ENCODE measurements at regions of chr7 and their contacts with region 1.

Region 1: DNA sequence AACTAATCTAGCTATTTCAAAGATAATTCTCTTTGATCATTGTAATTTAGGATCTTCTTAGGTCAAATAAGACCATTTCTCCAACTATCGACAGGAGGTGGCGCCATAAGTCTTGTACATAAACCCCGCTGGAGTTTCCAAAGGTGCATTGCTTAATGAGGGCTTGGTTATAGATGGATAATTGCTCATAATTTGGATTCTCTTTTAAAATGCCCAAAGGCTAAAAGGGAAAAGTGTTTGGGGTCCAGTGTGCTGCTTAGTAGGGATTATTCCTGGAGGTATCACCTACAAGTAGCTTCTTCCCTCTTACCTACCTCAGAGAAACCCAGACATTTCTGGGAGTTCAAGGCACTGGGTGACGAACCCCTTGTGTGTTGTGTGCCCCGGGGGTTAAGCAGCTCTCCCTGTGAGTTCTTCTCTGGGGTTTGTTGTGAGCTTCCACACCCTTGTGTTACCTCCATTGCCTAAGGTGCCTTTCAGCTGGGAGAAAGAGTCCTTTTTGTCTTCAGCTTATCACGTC is 75.2 kb downstream of the PAXIP1 start:
- DNase-seq: peak; percentile 88
- ATAC-seq: peak; percentile 54
- H3K4me3 ChIP-seq: peak overlapping the region; percentile 64 to 98 (median 83)
- H3K4me3 Mint-ChIP-seq: peak overlapping the region; percentile 97
- H3K27ac ChIP-seq: peak overlapping the region; percentile 83 to 94
- H3K27ac Mint-ChIP-seq: peak overlapping the region; percentile 96
- H3K4me1 ChIP-seq: peaks cover 12 to 14% of the 10 kb centered on the region in 2 donors
- H3K4me1 Mint-ChIP-seq: peaks cover 31% of the 10 kb centered on the region
- H3K27me3 ChIP-seq: no peaks in the 10 kb centered on the region
- H3K27me3 Mint-ChIP-seq: no peaks in the 10 kb centered on the region
- CTCF ChIP-seq: peak; percentile 83

Region 2: GRCh38 chr7:154628556-154628955 is 299.1 kb before region 1 on chr7:
- CTCF ChIA-PET with region 1: no interaction called
- POLR2A ChIA-PET with region 1: no interaction called
- intact Hi-C with region 1: no loop called
- DNase-seq: no peak
- ATAC-seq: no peak
- H3K4me3 ChIP-seq: no peak overlapping the region
- H3K4me3 Mint-ChIP-seq: no peak overlapping the region
- H3K27ac ChIP-seq: no peak overlapping the region
- H3K27ac Mint-ChIP-seq: no peak overlapping the region
- H3K4me1 ChIP-seq: no peaks in the 10 kb centered on the region
- H3K4me1 Mint-ChIP-seq: no peaks in the 10 kb centered on the region
- H3K27me3 ChIP-seq: no peaks in the 10 kb centered on the region
- H3K27me3 Mint-ChIP-seq: no peaks in the 10 kb centered on the region
- CTCF ChIP-seq: no peak

Region 3: GRCh38 chr7:154953006-154953684 is 25.5 kb after region 1 on chr7:
- CTCF ChIA-PET with region 1: interaction called, 59 read pairs
- POLR2A ChIA-PET with region 1: no interaction called
- intact Hi-C with region 1: loop called (anchors 2 kb)
- DNase-seq: peak; percentile 62
- ATAC-seq: no peak
- H3K4me3 ChIP-seq: no peak overlapping the region
- H3K4me3 Mint-ChIP-seq: no peak overlapping the region
- H3K27ac ChIP-seq: no peak overlapping the region
- H3K27ac Mint-ChIP-seq: no peak overlapping the region
- H3K4me1 ChIP-seq: no peaks in the 10 kb centered on the region
- H3K4me1 Mint-ChIP-seq: no peaks in the 10 kb centered on the region
- H3K27me3 ChIP-seq: no peaks in the 10 kb centered on the region
- H3K27me3 Mint-ChIP-seq: no peaks in the 10 kb centered on the region
- CTCF ChIP-seq: peak; percentile 69

Region 4: GRCh38 chr7:154965014-154965413 is 37.3 kb after region 1 on chr7:
- CTCF ChIA-PET with region 1: no interaction called
- POLR2A ChIA-PET with region 1: no interaction called
- intact Hi-C with region 1: no loop called
- DNase-seq: no peak
- ATAC-seq: no peak
- H3K4me3 ChIP-seq: no peak overlapping the region
- H3K4me3 Mint-ChIP-seq: no peak overlapping the region
- H3K27ac ChIP-seq: no peak overlapping the region
- H3K27ac Mint-ChIP-seq: no peak overlapping the region
- H3K4me1 ChIP-seq: no peaks in the 10 kb centered on the region
- H3K4me1 Mint-ChIP-seq: no peaks in the 10 kb centered on the region
- H3K27me3 ChIP-seq: no peaks in the 10 kb centered on the region
- H3K27me3 Mint-ChIP-seq: no peaks in the 10 kb centered on the region
- CTCF ChIP-seq: no peak

Region 5: GRCh38 chr7:155009570-155010157 is 82.0 kb after region 1 on chr7:
- CTCF ChIA-PET with region 1: interaction called, 75 read pairs
- POLR2A ChIA-PET with region 1: no interaction called
- intact Hi-C with region 1: loop called (anchors 1 kb)
- DNase-seq: peak; percentile 41
- ATAC-seq: peak; percentile 47
- H3K4me3 ChIP-seq: no peak overlapping the region
- H3K4me3 Mint-ChIP-seq: no peak overlapping the region
- H3K27ac ChIP-seq: no peak overlapping the region
- H3K27ac Mint-ChIP-seq: no peak overlapping the region
- H3K4me1 ChIP-seq: peaks cover 0 to 4% of the 10 kb centered on the region in 2 donors
- H3K4me1 Mint-ChIP-seq: peaks cover 3% of the 10 kb centered on the region
- H3K27me3 ChIP-seq: no peaks in the 10 kb centered on the region
- H3K27me3 Mint-ChIP-seq: no peaks in the 10 kb centered on the region
- CTCF ChIP-seq: peak; percentile 69

Region 6: DNA sequence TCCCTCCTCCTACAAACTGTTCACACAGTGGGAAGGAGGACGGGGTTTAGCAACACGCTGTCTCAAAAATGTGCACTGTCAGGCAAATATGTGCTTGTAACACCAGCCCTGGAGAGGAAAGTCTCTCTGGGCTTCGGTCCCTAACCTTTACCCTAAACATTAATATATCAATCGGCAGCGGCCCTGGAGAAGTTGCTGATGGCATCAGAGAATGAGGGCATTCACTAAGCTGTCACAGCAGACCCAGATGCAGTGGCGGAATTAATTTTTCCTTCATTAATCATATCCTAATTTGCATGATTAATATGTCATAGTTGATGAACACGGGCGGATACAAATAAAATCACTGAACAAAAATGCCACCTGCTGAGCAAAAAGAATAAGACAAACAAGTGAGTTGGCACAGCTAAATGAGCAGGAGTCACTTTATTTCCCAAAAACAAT is 324.8 kb after region 1 on chr7:
- CTCF ChIA-PET with region 1: interaction called, 11 read pairs
- POLR2A ChIA-PET with region 1: no interaction called
- intact Hi-C with region 1: no loop called
- DNase-seq: no peak
- ATAC-seq: no peak
- H3K4me3 ChIP-seq: no peak overlapping the region
- H3K4me3 Mint-ChIP-seq: no peak overlapping the region
- H3K27ac ChIP-seq: no peak overlapping the region
- H3K27ac Mint-ChIP-seq: no peak overlapping the region
- H3K4me1 ChIP-seq: no peaks in the 10 kb centered on the region
- H3K4me1 Mint-ChIP-seq: no peaks in the 10 kb centered on the region
- H3K27me3 ChIP-seq: peaks cover 0 to 3% (median 0%) of the 10 kb centered on the region in 4 experiments
- H3K27me3 Mint-ChIP-seq: peaks cover 15% of the 10 kb centered on the region
- CTCF ChIP-seq: no peak

Region 7: GRCh38 chr7:155371884-155372781 is 444.4 kb after region 1 on chr7:
- CTCF ChIA-PET with region 1: interaction called, 11 read pairs
- POLR2A ChIA-PET with region 1: no interaction called
- intact Hi-C with region 1: loop called (anchors 2 kb)
- DNase-seq: peak; percentile 64
- ATAC-seq: peak; percentile 68
- H3K4me3 ChIP-seq: peak overlapping the region in 4 of 5 experiments; percentile 4 to 66 (median 46)
- H3K4me3 Mint-ChIP-seq: peak overlapping the region; percentile 89
- H3K27ac ChIP-seq: no peak overlapping the region
- H3K27ac Mint-ChIP-seq: no peak overlapping the region
- H3K4me1 ChIP-seq: peaks cover 45 to 52% of the 10 kb centered on the region in 2 donors
- H3K4me1 Mint-ChIP-seq: peaks cover 34% of the 10 kb centered on the region
- H3K27me3 ChIP-seq: peaks cover 0 to 66% (median 60%) of the 10 kb centered on the region in 4 experiments
- H3K27me3 Mint-ChIP-seq: peaks cover 65% of the 10 kb centered on the region
- CTCF ChIP-seq: peak; percentile 61

Region 8: GRCh38 chr7:155653803-155654202 is 726.1 kb after region 1 on chr7:
- CTCF ChIA-PET with region 1: no interaction called
- POLR2A ChIA-PET with region 1: no interaction called
- intact Hi-C with region 1: loop called (anchors 10 kb)
- DNase-seq: no peak
- ATAC-seq: no peak
- H3K4me3 ChIP-seq: no peak overlapping the region
- H3K4me3 Mint-ChIP-seq: no peak overlapping the region
- H3K27ac ChIP-seq: no peak overlapping the region
- H3K27ac Mint-ChIP-seq: no peak overlapping the region
- H3K4me1 ChIP-seq: peaks cover 34 to 35% of the 10 kb centered on the region in 2 donors
- H3K4me1 Mint-ChIP-seq: peaks cover 72% of the 10 kb centered on the region
- H3K27me3 ChIP-seq: no peaks in the 10 kb centered on the region
- H3K27me3 Mint-ChIP-seq: no peaks in the 10 kb centered on the region
- CTCF ChIP-seq: no peak

Region 9: GRCh38 chr7:155769701-155770100 is 842.0 kb after region 1 on chr7:
- CTCF ChIA-PET with region 1: interaction called, 13 read pairs
- POLR2A ChIA-PET with region 1: no interaction called
- intact Hi-C with region 1: loop called (anchors 1 kb)
- DNase-seq: no peak
- ATAC-seq: no peak
- H3K4me3 ChIP-seq: no peak overlapping the region
- H3K4me3 Mint-ChIP-seq: no peak overlapping the region
- H3K27ac ChIP-seq: no peak overlapping the region
- H3K27ac Mint-ChIP-seq: no peak overlapping the region
- H3K4me1 ChIP-seq: peaks cover 0 to 2% of the 10 kb centered on the region in 2 donors
- H3K4me1 Mint-ChIP-seq: peaks cover 3% of the 10 kb centered on the region
- H3K27me3 ChIP-seq: no peaks in the 10 kb centered on the region
- H3K27me3 Mint-ChIP-seq: no peaks in the 10 kb centered on the region
- CTCF ChIP-seq: no peak